ENCODE measurements at regions of chr7 and their contacts with region 1.

Region 1: DNA sequence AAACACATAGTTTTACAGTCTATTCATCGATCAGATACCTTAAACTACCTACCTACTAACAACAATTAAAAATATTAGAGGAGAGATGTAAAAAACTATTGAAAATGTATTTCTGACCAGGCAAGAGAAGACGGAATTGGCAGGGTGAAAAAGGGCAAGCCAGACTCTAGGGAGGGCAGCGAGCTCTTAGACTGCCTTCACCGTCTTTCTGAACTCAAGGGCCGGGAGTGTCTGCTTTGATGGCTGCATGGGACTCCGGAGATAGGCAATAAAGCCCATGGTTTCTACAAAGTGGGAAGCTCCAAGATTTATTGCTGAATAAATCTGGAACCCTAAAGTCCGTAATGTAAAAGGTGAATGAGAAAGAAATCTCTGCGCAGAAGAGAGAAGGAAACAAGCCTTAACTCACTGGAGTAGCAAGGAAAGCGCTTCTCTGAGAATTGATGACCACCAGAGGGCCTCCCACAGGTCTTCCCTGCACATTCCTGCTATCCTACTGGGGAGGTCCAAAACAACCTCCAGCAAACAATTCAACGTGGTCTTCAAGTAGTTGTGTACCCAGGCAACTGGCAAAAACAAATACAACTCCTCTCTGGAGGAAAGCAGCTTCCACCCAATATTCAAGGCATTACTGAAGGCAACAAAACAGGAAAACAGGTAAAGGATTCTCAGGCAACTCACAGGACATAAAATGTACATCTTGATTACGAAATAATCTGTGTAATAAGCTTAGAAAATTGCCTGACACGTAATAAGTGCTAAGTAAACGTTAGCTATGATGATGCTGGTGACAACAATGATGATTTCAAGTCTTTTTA is 181.3 kb downstream of the SDK1 start:
- DNase-seq: peak; percentile 3
- H3K4me3 ChIP-seq: no peak overlapping the region
- H3K27ac ChIP-seq: no peak overlapping the region
- H3K27me3 ChIP-seq: no peaks in the 10 kb centered on the region
- CTCF ChIP-seq: peak; percentile 68

Region 2: DNA sequence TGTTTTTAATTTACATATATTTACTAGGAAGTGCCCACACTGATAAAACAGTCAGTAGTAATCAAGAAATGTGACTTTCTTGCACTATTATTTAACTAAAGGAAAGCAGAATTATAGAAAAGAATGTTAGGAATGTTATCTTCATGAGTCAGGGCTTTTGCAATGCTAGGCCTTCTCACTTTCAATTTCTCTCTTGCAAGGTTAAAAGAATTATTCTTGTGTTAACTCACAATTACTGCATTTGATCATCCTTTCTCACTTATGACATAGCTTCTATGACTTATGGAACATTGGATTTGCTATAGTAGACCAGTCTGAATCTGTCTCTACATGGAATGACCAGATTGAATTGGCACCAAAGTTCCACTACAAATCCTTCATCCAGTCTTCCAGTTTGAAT is 11.1 kb after region 1 on chr7:
- CTCF ChIA-PET with region 1: interaction called, 13 read pairs
- POLR2A ChIA-PET with region 1: no interaction called
- DNase-seq: peak; percentile 3
- H3K4me3 ChIP-seq: no peak overlapping the region
- H3K27ac ChIP-seq: no peak overlapping the region
- H3K27me3 ChIP-seq: no peaks in the 10 kb centered on the region
- CTCF ChIP-seq: no peak

Measured in AG04450 (cell line).